ENCODE measurements at regions of chr2 and their contacts with region 1.

Region 1: GRCh38 chr2:149816756-149817551 is 229.4 kb upstream of the MMADHC start:
- DNase-seq: no peak
- H3K4me3 Mint-ChIP-seq: no peak overlapping the region
- H3K27ac Mint-ChIP-seq: no peak overlapping the region
- H3K4me1 Mint-ChIP-seq: peaks cover 30% of the 10 kb centered on the region
- H3K27me3 Mint-ChIP-seq: no peaks in the 10 kb centered on the region
- CTCF ChIP-seq: no peak

Region 2: GRCh38 chr2:149767516-149767974 is 49.4 kb before region 1 on chr2:
- CTCF ChIA-PET with region 1: no interaction called
- intact Hi-C with region 1: no loop called
- DNase-seq: no peak
- H3K4me3 Mint-ChIP-seq: no peak overlapping the region
- H3K27ac Mint-ChIP-seq: no peak overlapping the region
- H3K4me1 Mint-ChIP-seq: peaks cover 27% of the 10 kb centered on the region
- H3K27me3 Mint-ChIP-seq: no peaks in the 10 kb centered on the region
- CTCF ChIP-seq: no peak

Region 3: DNA sequence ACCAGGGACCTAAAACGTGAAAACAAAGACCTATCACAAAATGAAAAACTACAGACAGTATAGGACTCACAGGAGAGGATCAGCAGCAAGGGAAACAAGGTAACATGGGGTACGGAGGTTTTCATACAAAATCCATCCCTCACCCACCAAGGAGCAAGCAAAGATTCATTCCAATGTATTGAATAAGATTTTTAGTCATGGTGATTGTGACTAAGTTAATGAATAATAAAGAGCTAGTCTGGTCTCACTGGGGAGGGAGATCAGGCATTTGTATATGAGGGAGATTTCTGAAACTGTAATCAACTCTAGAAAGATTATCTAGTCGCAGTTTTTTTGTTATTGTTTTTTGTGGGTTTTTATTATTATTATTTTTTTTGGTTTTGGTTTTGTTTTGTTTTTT is 107.1 kb after region 1 on chr2:
- CTCF ChIA-PET with region 1: no interaction called
- intact Hi-C with region 1: loop called (anchors 10 kb)
- DNase-seq: no peak
- H3K4me3 Mint-ChIP-seq: peak overlapping the region; percentile 10
- H3K27ac Mint-ChIP-seq: peak overlapping the region; percentile 63
- H3K4me1 Mint-ChIP-seq: peaks cover 18% of the 10 kb centered on the region
- H3K27me3 Mint-ChIP-seq: no peaks in the 10 kb centered on the region
- CTCF ChIP-seq: no peak